BJ (cell line): ENCODE measurements at regions of chr10 and their contacts with region 1.

Region 1: GRCh38 chr10:60908031-60908430 is 36.0 kb downstream of the RHOBTB1 start:
- DNase-seq: no peak
- H3K4me3 ChIP-seq: no peak overlapping the region
- H3K27me3 ChIP-seq: no peaks in the 10 kb centered on the region
- CTCF ChIP-seq: no peak

Region 2: GRCh38 chr10:60611291-60611747 is 296.7 kb before region 1 on chr10:
- CTCF ChIA-PET with region 1: no interaction called
- POLR2A ChIA-PET with region 1: no interaction called
- DNase-seq: no peak
- H3K4me3 ChIP-seq: no peak overlapping the region
- H3K27me3 ChIP-seq: no peaks in the 10 kb centered on the region
- CTCF ChIP-seq: no peak

Region 3: DNA sequence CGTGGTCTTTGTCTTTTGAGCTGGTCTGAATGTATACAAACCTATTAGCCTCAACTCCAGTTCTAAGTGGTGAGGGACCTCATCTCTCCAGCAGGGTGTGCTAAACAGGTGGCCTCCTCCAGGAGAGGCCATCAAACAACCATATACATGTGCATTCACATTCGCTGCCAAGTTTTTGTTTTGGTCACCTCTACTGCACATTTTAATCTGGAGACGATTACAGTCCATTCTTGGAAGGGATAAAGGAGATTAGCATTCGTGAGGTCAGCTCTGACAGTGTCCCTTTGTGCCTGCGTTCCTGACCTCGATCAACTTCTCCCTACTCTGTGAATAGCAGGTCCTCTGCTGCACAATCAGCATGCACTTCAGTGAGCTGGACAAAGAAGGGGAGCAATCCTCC is 24.8 kb before region 1 on chr10:
- CTCF ChIA-PET with region 1: interaction called, 10 read pairs
- POLR2A ChIA-PET with region 1: no interaction called
- DNase-seq: no peak
- H3K4me3 ChIP-seq: no peak overlapping the region
- H3K27me3 ChIP-seq: no peaks in the 10 kb centered on the region
- CTCF ChIP-seq: peak; percentile 55